ENCODE measurements at regions of chr11 and their contacts with region 1.

Region 1: DNA sequence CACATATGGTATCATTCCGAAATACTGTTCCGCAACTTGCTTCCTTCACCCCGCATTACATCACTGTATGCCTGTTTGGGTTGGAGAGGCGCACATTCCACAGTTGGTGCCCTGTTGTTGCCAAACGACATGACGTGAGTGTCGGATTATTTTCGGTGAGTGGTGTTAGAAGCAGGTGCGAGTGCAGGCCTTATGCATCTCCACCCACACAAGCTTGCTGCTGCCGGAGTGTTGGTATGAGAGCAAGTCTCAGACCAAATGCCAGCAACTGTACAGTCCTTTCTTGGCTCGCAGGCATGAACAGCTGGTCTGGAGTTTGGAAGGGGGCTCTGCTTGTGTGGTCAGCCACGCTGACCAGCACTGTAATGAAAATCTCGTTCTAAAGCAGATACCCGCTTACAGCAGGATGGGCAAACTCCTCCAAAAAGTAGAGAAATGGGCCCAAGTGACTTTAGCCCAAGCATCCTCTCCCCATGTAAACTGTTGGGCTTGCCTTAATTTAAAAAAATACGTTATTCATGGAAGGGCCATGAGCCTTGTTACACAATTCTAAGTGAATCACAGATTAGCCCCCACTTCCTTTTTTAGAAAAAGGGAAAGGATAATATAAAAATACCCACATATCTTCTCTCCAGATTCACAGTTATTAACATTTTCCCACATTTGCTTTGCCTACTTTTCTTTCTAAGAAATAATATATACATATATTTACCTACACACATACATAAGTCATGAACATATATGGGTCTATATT is 48.7 kb upstream of the OR9Q1 start:
- DNase-seq: no peak
- H3K4me3 Mint-ChIP-seq: no peak overlapping the region
- H3K27ac Mint-ChIP-seq: no peak overlapping the region
- H3K4me1 Mint-ChIP-seq: peaks cover 64% of the 10 kb centered on the region
- H3K27me3 Mint-ChIP-seq: no peaks in the 10 kb centered on the region
- CTCF ChIP-seq: no peak

Region 2: DNA sequence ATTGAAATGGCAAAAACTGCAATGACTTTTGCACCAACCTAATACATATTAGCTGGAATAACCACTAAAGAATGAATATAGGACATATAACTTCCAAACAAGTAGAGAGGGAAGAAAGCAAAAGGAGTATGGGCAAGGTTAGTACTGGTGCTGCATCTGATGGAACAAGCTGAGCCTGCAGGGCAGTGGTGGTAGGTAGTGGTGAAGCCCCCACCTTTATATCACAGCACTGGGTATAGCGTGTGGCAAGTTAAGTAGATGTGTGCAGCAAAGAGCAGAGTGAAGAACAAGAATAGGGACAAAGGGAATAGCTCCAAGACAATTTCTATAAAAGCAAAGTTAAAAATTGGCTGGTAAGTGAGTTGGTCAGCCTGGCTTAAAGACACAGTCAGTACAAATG is 151.2 kb before region 1 on chr11:
- CTCF ChIA-PET with region 1: no interaction called
- intact Hi-C with region 1: loop called (anchors 5 kb)
- DNase-seq: no peak
- H3K4me3 Mint-ChIP-seq: no peak overlapping the region
- H3K27ac Mint-ChIP-seq: peak overlapping the region; percentile 20
- H3K4me1 Mint-ChIP-seq: no peaks in the 10 kb centered on the region
- H3K27me3 Mint-ChIP-seq: no peaks in the 10 kb centered on the region
- CTCF ChIP-seq: no peak

Region 3: DNA sequence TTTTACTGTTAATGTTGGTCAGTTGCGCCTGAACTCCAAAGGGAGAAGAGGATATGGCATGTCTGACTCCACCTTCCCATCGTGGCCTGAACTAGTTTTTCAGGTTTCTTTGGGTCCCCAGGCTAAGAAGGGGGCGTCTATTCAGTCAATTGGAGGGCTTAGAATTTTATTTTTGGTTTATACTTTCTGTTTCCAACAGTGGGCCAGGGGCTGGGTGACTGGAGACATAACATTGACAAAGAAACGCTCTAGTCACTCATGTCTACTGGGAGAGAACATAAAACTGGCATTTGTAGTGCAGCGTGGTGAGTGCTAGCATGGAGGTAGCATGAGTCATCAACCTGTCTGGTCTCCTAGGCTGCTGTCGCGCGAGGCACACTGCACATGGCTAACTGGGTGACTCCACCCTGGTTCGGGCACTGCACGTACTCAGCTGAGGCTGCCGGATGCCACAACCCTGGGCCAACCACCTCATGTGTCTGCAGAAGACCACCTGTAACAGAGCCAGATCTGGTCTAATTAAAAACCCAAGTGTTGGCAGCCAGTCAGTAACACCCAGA is 71.4 kb before region 1 on chr11:
- CTCF ChIA-PET with region 1: no interaction called
- intact Hi-C with region 1: loop called (anchors 5 kb)
- DNase-seq: peak; percentile 85
- H3K4me3 Mint-ChIP-seq: peak overlapping the region; percentile 63
- H3K27ac Mint-ChIP-seq: peak overlapping the region; percentile 99
- H3K4me1 Mint-ChIP-seq: peaks cover 61% of the 10 kb centered on the region
- H3K27me3 Mint-ChIP-seq: no peaks in the 10 kb centered on the region
- CTCF ChIP-seq: no peak

Region 4: DNA sequence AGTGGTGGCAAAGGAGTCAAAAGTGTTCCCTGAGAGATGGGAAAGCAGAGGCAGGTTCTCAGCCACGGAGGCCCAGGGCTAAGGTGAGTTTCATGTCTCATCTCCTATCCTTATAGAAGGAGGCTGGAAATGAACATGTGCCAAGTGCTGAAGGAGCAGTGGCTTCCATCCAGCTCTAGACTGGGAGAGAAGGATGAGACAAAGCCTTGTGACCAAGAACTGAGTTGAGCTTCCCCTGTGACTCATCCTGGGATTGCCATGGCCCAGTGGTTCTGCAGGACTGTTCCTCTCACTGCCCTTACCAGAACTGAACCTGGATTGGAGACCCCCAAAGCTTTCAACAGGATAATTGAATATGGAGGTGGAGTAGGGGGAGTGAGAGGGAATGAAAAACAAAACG is 31.9 kb after region 1 on chr11:
- CTCF ChIA-PET with region 1: no interaction called
- intact Hi-C with region 1: no loop called
- DNase-seq: no peak
- H3K4me3 Mint-ChIP-seq: no peak overlapping the region
- H3K27ac Mint-ChIP-seq: no peak overlapping the region
- H3K4me1 Mint-ChIP-seq: no peaks in the 10 kb centered on the region
- H3K27me3 Mint-ChIP-seq: no peaks in the 10 kb centered on the region
- CTCF ChIP-seq: no peak

Region 5: DNA sequence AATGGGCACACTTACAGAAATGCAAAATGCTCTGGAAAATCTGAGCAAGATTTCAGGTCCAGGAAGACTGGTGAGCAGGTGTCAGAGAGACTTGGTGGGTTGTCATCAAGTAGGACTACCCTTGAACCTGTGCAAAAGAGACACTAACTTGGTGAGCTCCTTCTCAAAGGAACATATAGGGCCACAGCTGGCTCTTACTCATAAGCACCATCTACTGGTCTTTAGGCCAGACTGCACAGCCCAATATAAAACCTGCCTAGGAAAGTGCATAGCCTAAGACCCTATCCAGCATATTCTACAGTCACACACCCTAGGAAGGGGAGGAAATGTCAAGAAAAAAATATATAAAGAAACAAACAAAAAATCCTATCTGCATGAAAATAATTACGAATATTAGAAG is 311.2 kb after region 1 on chr11:
- CTCF ChIA-PET with region 1: no interaction called
- intact Hi-C with region 1: loop called (anchors 5 kb)
- DNase-seq: peak; percentile 38
- H3K4me3 Mint-ChIP-seq: no peak overlapping the region
- H3K27ac Mint-ChIP-seq: no peak overlapping the region
- H3K4me1 Mint-ChIP-seq: peaks cover 15% of the 10 kb centered on the region
- H3K27me3 Mint-ChIP-seq: no peaks in the 10 kb centered on the region
- CTCF ChIP-seq: peak; percentile 31